GM12878 (cell line): ENCODE measurements at regions of chr14 and their contacts with region 1.

Region 1: DNA sequence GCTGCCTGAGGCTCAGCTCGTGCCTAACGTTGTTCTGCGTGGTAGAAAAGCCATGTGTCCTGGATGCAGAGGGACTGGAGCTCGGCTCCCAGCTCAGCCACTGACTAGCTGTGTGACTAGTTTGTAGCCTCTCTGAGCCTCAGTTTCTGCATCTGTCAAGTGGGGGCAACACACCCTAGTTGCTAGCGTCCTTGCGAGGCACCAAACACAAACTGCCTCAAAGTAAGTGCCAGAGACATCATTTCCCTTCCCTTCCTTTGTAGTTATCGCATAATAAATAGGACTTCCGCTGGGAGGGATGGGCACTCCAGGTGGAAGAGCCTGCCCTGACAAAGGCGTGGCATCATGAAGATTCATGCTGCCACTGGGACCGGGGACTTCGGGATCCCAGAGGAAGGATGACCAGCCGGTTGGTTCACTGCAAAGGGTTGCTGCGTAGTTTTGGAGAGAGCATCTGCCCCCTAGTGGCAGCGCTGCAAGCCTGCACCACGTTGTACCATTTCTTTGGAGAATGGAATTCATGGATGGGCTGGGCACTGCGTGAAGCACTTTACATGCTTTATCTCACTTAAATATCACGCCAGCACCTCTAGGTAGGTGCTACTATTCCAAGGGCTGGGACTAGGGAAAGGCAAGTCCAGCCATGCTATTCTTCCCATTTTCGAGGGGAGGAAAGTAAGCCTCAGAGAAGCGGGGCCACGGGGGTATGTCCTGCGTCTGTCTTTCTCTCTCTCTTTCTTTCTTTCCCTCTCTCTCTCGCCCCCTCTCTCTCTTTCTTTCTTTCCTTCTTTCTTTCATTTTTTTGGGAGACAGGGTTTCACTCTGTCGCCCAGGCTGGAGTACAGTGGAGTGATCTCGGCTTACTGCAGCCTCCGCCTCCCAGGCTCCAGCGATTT is 4.6 kb downstream of the CCDC197 start:
- DNase-seq: no peak
- ATAC-seq: peak; percentile 83
- H3K4me3 ChIP-seq: no peak overlapping the region
- H3K27ac ChIP-seq: no peak overlapping the region
- H3K4me1 ChIP-seq: peaks cover 26% of the 10 kb centered on the region
- H3K27me3 ChIP-seq: no peaks in the 10 kb centered on the region
- CTCF ChIP-seq: peak; percentile 93 to 98 (median 97); a peak in 5 of 6 replicates
- EP300 ChIP-seq: no peak
- POLR2A ChIP-seq: no peak
- RAD21 ChIP-seq: peak; percentile 95

Region 2: DNA sequence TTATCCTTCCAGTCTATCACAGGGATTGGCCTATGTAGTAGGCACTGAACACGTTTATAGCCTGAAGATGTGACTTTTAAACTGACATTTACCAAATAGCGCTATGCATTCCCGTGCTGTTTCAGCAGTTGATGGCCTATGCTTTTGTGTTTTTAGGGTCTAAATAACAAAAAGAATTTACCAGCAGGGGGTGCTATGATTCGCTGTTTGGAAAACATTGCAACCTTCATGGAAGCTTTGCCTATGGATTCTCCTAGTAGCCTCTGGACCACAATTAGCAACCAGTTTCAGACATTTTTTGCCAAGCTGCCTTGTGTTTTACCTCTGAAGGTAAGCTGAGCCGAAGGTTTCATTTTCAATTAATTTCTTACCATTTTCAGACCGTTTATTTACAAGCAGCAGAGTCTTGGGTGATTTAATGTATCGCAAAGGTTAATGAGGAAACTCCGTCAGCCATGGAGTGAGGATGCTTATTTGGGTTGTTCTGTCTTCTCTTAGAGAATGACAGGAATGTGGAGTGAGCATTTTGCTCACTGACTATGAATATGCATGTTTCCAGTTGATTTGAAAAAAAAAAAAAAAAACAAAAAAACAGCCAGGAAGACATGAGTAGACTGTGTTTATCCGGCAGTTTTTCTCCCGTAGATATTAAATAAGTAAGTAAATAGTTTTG is 346.5 kb before region 1 on chr14:
- CTCF ChIA-PET with region 1: interaction called, 8 read pairs
- POLR2A ChIA-PET with region 1: no interaction called
- RAD21 ChIA-PET with region 1: no interaction called
- SMC1A ChIA-PET with region 1: interaction called, 3 read pairs
- in situ Hi-C with region 1: loop called (anchors 10 kb)
- intact Hi-C with region 1: no loop called
- DNase-seq: peak; percentile 3
- ATAC-seq: peak; percentile 50; the same call in 2 of the 3 replicates
- H3K4me3 ChIP-seq: no peak overlapping the region
- H3K27ac ChIP-seq: no peak overlapping the region
- H3K4me1 ChIP-seq: no peaks in the 10 kb centered on the region
- H3K27me3 ChIP-seq: no peaks in the 10 kb centered on the region
- CTCF ChIP-seq: peak; percentile 30 to 58 (median 58); a peak in 5 of 6 replicates
- EP300 ChIP-seq: no peak
- POLR2A ChIP-seq: no peak
- RAD21 ChIP-seq: peak; percentile 61

Region 3: DNA sequence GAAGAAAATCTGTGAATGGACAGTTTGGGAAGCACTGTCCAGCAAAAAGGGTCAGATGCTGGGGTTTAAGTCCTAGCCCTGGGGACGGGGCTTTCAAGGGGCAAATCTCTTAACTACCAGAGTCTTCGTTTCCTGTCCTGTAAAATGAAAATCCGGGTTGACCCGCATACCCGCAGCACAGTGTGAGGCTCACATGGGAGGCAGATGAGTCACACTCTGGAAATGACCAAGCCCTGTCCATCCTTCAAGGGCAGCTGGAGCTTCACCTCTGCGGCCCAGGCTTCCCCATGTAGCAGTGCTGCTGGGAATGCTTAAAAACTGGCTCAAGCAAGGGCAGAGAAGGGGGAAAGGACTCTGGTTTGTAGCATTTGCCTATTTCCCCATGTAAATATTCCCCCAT is 55.6 kb before region 1 on chr14:
- CTCF ChIA-PET with region 1: interaction called, 541 read pairs
- POLR2A ChIA-PET with region 1: interaction called, 4 read pairs
- RAD21 ChIA-PET with region 1: interaction called, 344 read pairs
- SMC1A ChIA-PET with region 1: interaction called, 180 read pairs
- in situ Hi-C with region 1: loop called (anchors 5 kb)
- intact Hi-C with region 1: no loop called
- DNase-seq: no peak
- ATAC-seq: peak; percentile 84
- H3K4me3 ChIP-seq: no peak overlapping the region
- H3K27ac ChIP-seq: no peak overlapping the region
- H3K4me1 ChIP-seq: peaks cover 3% of the 10 kb centered on the region
- H3K27me3 ChIP-seq: no peaks in the 10 kb centered on the region
- CTCF ChIP-seq: no peak
- EP300 ChIP-seq: no peak
- POLR2A ChIP-seq: no peak
- RAD21 ChIP-seq: no peak

Region 4: DNA sequence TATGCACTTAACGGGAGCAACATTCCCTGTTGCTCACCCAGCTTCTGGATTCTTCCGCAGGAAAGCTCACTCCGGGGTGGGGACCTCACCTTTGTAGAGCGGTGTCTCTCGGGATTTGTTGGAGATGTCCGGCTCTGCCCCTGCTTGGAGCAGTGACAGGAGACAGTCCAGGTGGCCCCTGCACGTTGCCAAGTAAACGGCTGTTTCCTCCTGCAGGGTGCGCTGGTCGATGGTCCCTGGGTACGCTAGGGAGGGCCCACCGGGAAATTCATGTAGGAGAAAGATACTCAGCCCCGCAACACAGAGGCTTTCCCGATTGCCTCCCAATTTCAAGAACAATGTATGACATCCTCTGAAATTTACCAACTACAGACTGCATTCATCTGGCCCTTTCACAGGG is 48.5 kb before region 1 on chr14:
- CTCF ChIA-PET with region 1: interaction called, 58 read pairs
- POLR2A ChIA-PET with region 1: interaction called, 14 read pairs
- RAD21 ChIA-PET with region 1: interaction called, 30 read pairs
- SMC1A ChIA-PET with region 1: interaction called, 47 read pairs
- in situ Hi-C with region 1: no loop called
- intact Hi-C with region 1: loop called (anchors 5 kb)
- DNase-seq: no peak
- ATAC-seq: no peak
- H3K4me3 ChIP-seq: no peak overlapping the region
- H3K27ac ChIP-seq: no peak overlapping the region
- H3K4me1 ChIP-seq: peaks cover 59% of the 10 kb centered on the region
- H3K27me3 ChIP-seq: no peaks in the 10 kb centered on the region
- CTCF ChIP-seq: peak in 2 of 3 experiments; percentile 27 to 39; a peak in 3 of 6 replicates
- EP300 ChIP-seq: no peak
- POLR2A ChIP-seq: no peak
- RAD21 ChIP-seq: peak; percentile 57

Region 5: GRCh38 chr14:93959239-93960107 is 42.3 kb before region 1 on chr14:
- CTCF ChIA-PET with region 1: interaction called, 51 read pairs
- POLR2A ChIA-PET with region 1: interaction called, 14 read pairs
- RAD21 ChIA-PET with region 1: interaction called, 30 read pairs
- SMC1A ChIA-PET with region 1: interaction called, 47 read pairs
- in situ Hi-C with region 1: no loop called
- intact Hi-C with region 1: loop called (anchors 5 kb)
- DNase-seq: peak; percentile 90
- ATAC-seq: peak; percentile 82
- H3K4me3 ChIP-seq: peak overlapping the region; percentile 11; the same call in 1 of the 2 replicates
- H3K27ac ChIP-seq: peak overlapping the region; percentile 90
- H3K4me1 ChIP-seq: peaks cover 95% of the 10 kb centered on the region
- H3K27me3 ChIP-seq: no peaks in the 10 kb centered on the region
- CTCF ChIP-seq: no peak
- EP300 ChIP-seq: peak; percentile 98 to 99
- POLR2A ChIP-seq: peak; percentile 91
- RAD21 ChIP-seq: no peak

Region 6: GRCh38 chr14:93975791-93976476 is 25.8 kb before region 1 on chr14:
- CTCF ChIA-PET with region 1: interaction called, 399 read pairs
- POLR2A ChIA-PET with region 1: interaction called, 33 read pairs
- RAD21 ChIA-PET with region 1: interaction called, 182 read pairs
- SMC1A ChIA-PET with region 1: interaction called, 155 read pairs
- in situ Hi-C with region 1: no loop called
- intact Hi-C with region 1: loop called (anchors 1 kb)
- DNase-seq: peak; percentile 92
- ATAC-seq: peak; percentile 73
- H3K4me3 ChIP-seq: peak overlapping the region; percentile 67; the same call in 1 of the 2 replicates
- H3K27ac ChIP-seq: peak overlapping the region; percentile 96
- H3K4me1 ChIP-seq: peaks cover 89% of the 10 kb centered on the region
- H3K27me3 ChIP-seq: no peaks in the 10 kb centered on the region
- CTCF ChIP-seq: peak; percentile 10 to 43 (median 20); a peak in 3 of 6 replicates
- EP300 ChIP-seq: peak; percentile 52 to 59; a peak in 3 of 4 replicates
- POLR2A ChIP-seq: 0 out of 2 replicates have a peak, but pooled peaks have one; percentile 18
- RAD21 ChIP-seq: peak; percentile 15; the same call in 1 of the 2 replicates

Region 7: DNA sequence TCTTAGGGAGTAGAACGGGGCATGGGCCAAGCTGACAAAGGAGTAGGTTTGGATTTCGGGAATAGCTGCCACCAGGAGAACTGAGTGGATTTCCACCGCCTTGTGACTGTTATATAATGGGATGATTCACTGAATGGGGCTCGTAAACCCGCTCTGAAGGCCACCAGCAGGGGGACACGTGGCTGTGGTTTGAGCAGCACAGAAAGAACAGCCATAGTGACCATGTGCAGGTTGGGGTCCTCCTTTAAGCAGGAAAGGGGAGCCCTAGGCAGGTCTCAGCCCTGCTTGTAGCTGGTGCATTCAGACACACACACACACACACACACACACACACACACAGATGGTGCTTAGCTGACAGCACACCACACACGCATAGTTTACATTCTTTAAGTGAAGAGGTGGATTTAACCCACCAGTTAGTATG is 16.8 kb before region 1 on chr14:
- CTCF ChIA-PET with region 1: interaction called, 399 read pairs
- POLR2A ChIA-PET with region 1: interaction called, 14 read pairs
- RAD21 ChIA-PET with region 1: interaction called, 182 read pairs
- SMC1A ChIA-PET with region 1: interaction called, 155 read pairs
- in situ Hi-C with region 1: no loop called
- intact Hi-C with region 1: no loop called
- DNase-seq: no peak
- ATAC-seq: peak; percentile 51
- H3K4me3 ChIP-seq: no peak overlapping the region
- H3K27ac ChIP-seq: no peak overlapping the region
- H3K4me1 ChIP-seq: peaks cover 18% of the 10 kb centered on the region
- H3K27me3 ChIP-seq: no peaks in the 10 kb centered on the region
- CTCF ChIP-seq: peak; percentile 19 to 40 (median 33); a peak in 5 of 6 replicates
- EP300 ChIP-seq: no peak
- POLR2A ChIP-seq: no peak
- RAD21 ChIP-seq: peak; percentile 41

Region 8: GRCh38 chr14:94045563-94046345 is 44.0 kb after region 1 on chr14:
- CTCF ChIA-PET with region 1: no interaction called
- POLR2A ChIA-PET with region 1: no interaction called
- RAD21 ChIA-PET with region 1: no interaction called
- SMC1A ChIA-PET with region 1: no interaction called
- in situ Hi-C with region 1: no loop called
- intact Hi-C with region 1: no loop called
- DNase-seq: no peak
- ATAC-seq: no peak
- H3K4me3 ChIP-seq: no peak overlapping the region
- H3K27ac ChIP-seq: no peak overlapping the region
- H3K4me1 ChIP-seq: no peaks in the 10 kb centered on the region
- H3K27me3 ChIP-seq: no peaks in the 10 kb centered on the region
- CTCF ChIP-seq: no peak
- EP300 ChIP-seq: no peak
- POLR2A ChIP-seq: 0 out of 2 replicates have a peak, but pooled peaks have one; percentile 33
- RAD21 ChIP-seq: no peak

Region 9: GRCh38 chr14:94066089-94066676 is 64.4 kb after region 1 on chr14:
- CTCF ChIA-PET with region 1: no interaction called
- POLR2A ChIA-PET with region 1: no interaction called
- RAD21 ChIA-PET with region 1: no interaction called
- SMC1A ChIA-PET with region 1: no interaction called
- in situ Hi-C with region 1: no loop called
- intact Hi-C with region 1: no loop called
- DNase-seq: no peak
- ATAC-seq: no peak
- H3K4me3 ChIP-seq: no peak overlapping the region
- H3K27ac ChIP-seq: no peak overlapping the region
- H3K4me1 ChIP-seq: no peaks in the 10 kb centered on the region
- H3K27me3 ChIP-seq: no peaks in the 10 kb centered on the region
- CTCF ChIP-seq: no peak
- EP300 ChIP-seq: no peak
- POLR2A ChIP-seq: no peak
- RAD21 ChIP-seq: no peak